ENCODE measurements at regions of chr12 and their contacts with region 1.

Region 1: GRCh38 chr12:41344776-41345470 is 156.8 kb downstream of the PDZRN4 start:
- DNase-seq: no peak
- H3K4me3 ChIP-seq: no peak overlapping the region
- H3K27ac ChIP-seq: no peak overlapping the region
- H3K4me1 ChIP-seq: no peaks in the 10 kb centered on the region
- H3K27me3 ChIP-seq: no peaks in the 10 kb centered on the region
- CTCF ChIP-seq: no peak
- POLR2A ChIP-seq: no peak

Region 2: GRCh38 chr12:41045509-41045908 is 299.4 kb before region 1 on chr12:
- intact Hi-C with region 1: loop called (anchors 5 kb)
- DNase-seq: no peak
- H3K4me3 ChIP-seq: no peak overlapping the region
- H3K27ac ChIP-seq: no peak overlapping the region
- H3K4me1 ChIP-seq: no peaks in the 10 kb centered on the region
- H3K27me3 ChIP-seq: no peaks in the 10 kb centered on the region
- CTCF ChIP-seq: no peak
- POLR2A ChIP-seq: no peak

Measured in breast epithelium (tissue), 4 donors.